ENCODE measurements at regions of chr1 and their contacts with region 1.

Region 1: GRCh38 chr1:85307987-85308832 is 31.8 kb upstream of the BCL10 start:
- DNase-seq: peak; percentile 61
- H3K4me3 ChIP-seq: no peak overlapping the region
- H3K27ac ChIP-seq: no peak overlapping the region
- H3K4me1 ChIP-seq: peaks cover 4% of the 10 kb centered on the region
- CTCF ChIP-seq: peak; percentile 85

Region 2: GRCh38 chr1:85134576-85135395 is 173.4 kb before region 1 on chr1:
- CTCF ChIA-PET with region 1: no interaction called
- POLR2A ChIA-PET with region 1: no interaction called
- intact Hi-C with region 1: no loop called
- DNase-seq: no peak
- H3K4me3 ChIP-seq: no peak overlapping the region
- H3K27ac ChIP-seq: no peak overlapping the region
- H3K4me1 ChIP-seq: no peaks in the 10 kb centered on the region
- CTCF ChIP-seq: no peak

Region 3: GRCh38 chr1:85259118-85259911 is 48.9 kb before region 1 on chr1 and contains the start of gene C1orf52:
- CTCF ChIA-PET with region 1: interaction called, 16 read pairs
- POLR2A ChIA-PET with region 1: no interaction called
- intact Hi-C with region 1: no loop called
- DNase-seq: peak; percentile 95
- H3K4me3 ChIP-seq: peak within 1 kb of the TSS; percentile 98
- H3K27ac ChIP-seq: peak within 1 kb of the TSS; percentile 47
- H3K4me1 ChIP-seq: peaks cover 19% of the 10 kb centered on the region
- CTCF ChIP-seq: peak; percentile 90
- total RNA-seq, gene C1orf52: 35.6 and 55.3 TPM in 2 replicates

Measured in OCI-LY7 (cell line).